GM12878 (cell line): ENCODE measurements at regions of chr15 and their contacts with region 1.

Region 1: GRCh38 chr15:88179562-88179961 is 77.0 kb downstream of the NTRK3 start:
- DNase-seq: peak; percentile 20
- ATAC-seq: peak; percentile 86
- H3K4me3 ChIP-seq: no peak overlapping the region
- H3K27ac ChIP-seq: no peak overlapping the region
- H3K4me1 ChIP-seq: peaks cover 8% of the 10 kb centered on the region
- H3K27me3 ChIP-seq: no peaks in the 10 kb centered on the region
- CTCF ChIP-seq: no peak
- EP300 ChIP-seq: peak in 1 of 2 experiments; percentile 56; a peak in 1 of 4 replicates
- POLR2A ChIP-seq: no peak
- RAD21 ChIP-seq: no peak

Region 2: GRCh38 chr15:88049506-88049905 is 130.1 kb before region 1 on chr15:
- CTCF ChIA-PET with region 1: no interaction called
- POLR2A ChIA-PET with region 1: no interaction called
- RAD21 ChIA-PET with region 1: no interaction called
- SMC1A ChIA-PET with region 1: no interaction called
- in situ Hi-C with region 1: no loop called
- intact Hi-C with region 1: no loop called
- DNase-seq: no peak
- ATAC-seq: no peak
- H3K4me3 ChIP-seq: no peak overlapping the region
- H3K27ac ChIP-seq: no peak overlapping the region
- H3K4me1 ChIP-seq: no peaks in the 10 kb centered on the region
- H3K27me3 ChIP-seq: no peaks in the 10 kb centered on the region; a peak in 1 of 4 replicates
- CTCF ChIP-seq: no peak
- EP300 ChIP-seq: no peak
- POLR2A ChIP-seq: no peak
- RAD21 ChIP-seq: no peak

Region 3: DNA sequence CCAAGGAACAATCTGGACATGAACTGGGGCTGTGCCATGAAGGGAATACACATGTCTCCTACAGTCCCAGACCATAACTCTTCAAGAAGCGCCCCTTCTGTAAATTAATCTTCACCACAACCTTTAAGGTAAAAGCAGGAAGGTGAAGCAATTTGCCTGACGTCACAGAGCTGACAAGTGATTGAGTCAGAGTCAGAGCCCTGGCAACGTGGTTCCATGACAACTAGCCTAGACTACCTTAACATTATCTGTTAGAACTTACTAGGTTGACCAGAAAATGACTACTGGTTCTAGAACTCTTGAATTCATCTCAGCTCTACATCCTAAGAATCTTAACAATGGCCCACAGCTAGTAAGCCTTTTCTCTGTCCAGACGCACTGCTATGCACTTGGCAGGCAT is 47.6 kb before region 1 on chr15:
- CTCF ChIA-PET with region 1: no interaction called
- POLR2A ChIA-PET with region 1: no interaction called
- RAD21 ChIA-PET with region 1: no interaction called
- SMC1A ChIA-PET with region 1: no interaction called
- in situ Hi-C with region 1: no loop called
- intact Hi-C with region 1: loop called (anchors 5 kb)
- DNase-seq: no peak
- ATAC-seq: no peak
- H3K4me3 ChIP-seq: no peak overlapping the region
- H3K27ac ChIP-seq: no peak overlapping the region
- H3K4me1 ChIP-seq: no peaks in the 10 kb centered on the region
- H3K27me3 ChIP-seq: no peaks in the 10 kb centered on the region
- CTCF ChIP-seq: no peak
- EP300 ChIP-seq: no peak
- POLR2A ChIP-seq: no peak
- RAD21 ChIP-seq: no peak